HepG2 (cell line): ENCODE measurements at regions of chrX and their contacts with region 1.

Region 1: GRCh38 chrX:140733769-140734342 is 24.3 kb downstream of the LINC00632 start:
- DNase-seq: peak; percentile 5
- ATAC-seq: peak; percentile 76
- H3K4me3 ChIP-seq: no peak overlapping the region
- H3K27ac ChIP-seq: no peak overlapping the region
- H3K4me1 ChIP-seq: no peaks in the 10 kb centered on the region
- H3K27me3 ChIP-seq: no peaks in the 10 kb centered on the region
- CTCF ChIP-seq: peak; percentile 74
- EP300 ChIP-seq: no peak
- POLR2A ChIP-seq: no peak
- RAD21 ChIP-seq: no peak

Region 2: DNA sequence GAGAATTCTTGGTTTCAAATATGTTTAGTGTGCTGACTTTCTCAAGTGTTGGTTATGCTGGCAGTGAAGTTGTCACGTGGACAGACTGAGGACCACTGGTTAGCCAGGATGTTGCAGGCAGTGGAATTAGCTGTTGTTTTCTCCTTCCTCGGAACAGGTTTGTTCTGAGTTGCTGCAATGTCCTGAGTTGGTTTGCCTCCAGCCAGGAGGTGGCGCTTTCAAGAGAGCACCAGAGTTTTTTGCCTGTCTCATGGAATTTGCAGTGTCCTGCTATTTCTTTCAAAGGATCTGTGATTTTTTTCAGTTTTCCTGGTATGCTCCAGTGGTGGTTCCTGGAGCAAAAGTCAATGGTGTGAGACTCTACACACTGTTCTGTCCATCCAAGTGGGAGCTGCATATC is 610.4 kb before region 1 on chrX:
- CTCF ChIA-PET with region 1: no interaction called
- POLR2A ChIA-PET with region 1: no interaction called
- in situ Hi-C with region 1: no loop called
- intact Hi-C with region 1: loop called (anchors 5 kb)
- DNase-seq: no peak
- ATAC-seq: no peak
- H3K4me3 ChIP-seq: no peak overlapping the region
- H3K27ac ChIP-seq: no peak overlapping the region
- H3K4me1 ChIP-seq: no peaks in the 10 kb centered on the region
- H3K27me3 ChIP-seq: no peaks in the 10 kb centered on the region
- CTCF ChIP-seq: no peak
- EP300 ChIP-seq: no peak
- POLR2A ChIP-seq: no peak
- RAD21 ChIP-seq: no peak

Region 3: GRCh38 chrX:140701480-140701879 is 32.4 kb before region 1 on chrX:
- CTCF ChIA-PET with region 1: interaction called, 6 read pairs
- POLR2A ChIA-PET with region 1: no interaction called
- in situ Hi-C with region 1: no loop called
- intact Hi-C with region 1: loop called (anchors 1 kb)
- DNase-seq: no peak
- ATAC-seq: peak; percentile 24; the same call in 1 of the 3 replicates
- H3K4me3 ChIP-seq: no peak overlapping the region
- H3K27ac ChIP-seq: no peak overlapping the region
- H3K4me1 ChIP-seq: no peaks in the 10 kb centered on the region
- H3K27me3 ChIP-seq: no peaks in the 10 kb centered on the region
- CTCF ChIP-seq: peak; percentile 27; the same call in 1 of the 2 replicates
- EP300 ChIP-seq: no peak
- POLR2A ChIP-seq: no peak
- RAD21 ChIP-seq: no peak

Region 4: DNA sequence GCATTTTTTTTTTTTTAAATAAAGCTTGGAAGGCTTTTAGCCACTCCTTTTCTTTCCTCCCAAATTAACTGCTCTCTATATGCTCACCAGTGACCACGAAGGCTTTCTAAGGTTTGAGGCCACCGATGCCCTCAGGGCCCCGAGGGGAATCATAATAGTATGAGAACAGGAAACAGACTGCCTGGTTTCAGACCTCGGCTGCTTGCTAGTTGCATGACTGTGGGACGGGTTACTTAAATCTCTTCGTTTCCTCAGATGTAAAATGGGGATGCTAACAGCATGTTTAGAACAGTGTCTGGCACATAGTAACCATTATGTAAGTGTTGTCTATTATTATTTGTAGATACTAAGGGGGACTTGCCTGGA is 20.7 kb before region 1 on chrX:
- CTCF ChIA-PET with region 1: no interaction called
- POLR2A ChIA-PET with region 1: no interaction called
- in situ Hi-C with region 1: no loop called
- intact Hi-C with region 1: no loop called
- DNase-seq: no peak
- ATAC-seq: no peak
- H3K4me3 ChIP-seq: no peak overlapping the region
- H3K27ac ChIP-seq: no peak overlapping the region
- H3K4me1 ChIP-seq: no peaks in the 10 kb centered on the region
- H3K27me3 ChIP-seq: no peaks in the 10 kb centered on the region; a peak in 1 of 5 replicates
- CTCF ChIP-seq: no peak
- EP300 ChIP-seq: no peak
- POLR2A ChIP-seq: no peak
- RAD21 ChIP-seq: no peak